ENCODE measurements at regions of chr15 and their contacts with region 1.

Region 1: GRCh38 chr15:41852736-41853590 is 14.3 kb downstream of the PLA2G4B start:
- DNase-seq: no peak
- ATAC-seq: peak; percentile 11; the same call in 1 of the 3 replicates
- H3K4me3 ChIP-seq: no peak overlapping the region
- H3K27ac ChIP-seq: no peak overlapping the region
- H3K4me1 ChIP-seq: peaks cover 0 to 45% of the 10 kb centered on the region in 2 experiments; a peak in 1 of 5 replicates
- H3K27me3 ChIP-seq: peaks cover 46 to 75% of the 10 kb centered on the region in 2 experiments; a peak in 4 of 5 replicates
- CTCF ChIP-seq: no peak
- EP300 ChIP-seq: no peak
- POLR2A ChIP-seq: no peak
- RAD21 ChIP-seq: no peak

Region 2: DNA sequence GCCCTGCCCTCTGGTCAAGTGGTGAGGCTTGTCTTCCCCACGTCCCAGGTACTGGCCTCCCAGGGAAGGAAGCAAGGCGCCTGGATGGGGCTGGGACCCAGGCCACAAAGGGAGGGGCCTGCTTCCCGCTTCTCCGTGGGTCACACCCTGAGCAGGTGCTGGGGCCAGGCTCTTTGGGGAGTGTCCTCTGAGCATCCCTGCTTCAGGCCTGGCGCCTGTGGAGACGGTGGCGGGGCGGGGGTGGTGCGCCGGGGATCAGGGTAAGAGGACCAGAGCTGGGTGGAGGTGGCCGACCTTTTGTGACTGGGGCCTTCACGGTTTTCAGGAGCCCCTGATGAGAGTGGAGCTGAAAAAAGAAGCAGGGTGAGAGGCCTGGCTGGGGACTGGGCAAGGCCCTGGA is 10.7 kb before region 1 on chr15:
- CTCF ChIA-PET with region 1: no interaction called
- POLR2A ChIA-PET with region 1: interaction called, 10 read pairs
- in situ Hi-C with region 1: no loop called
- intact Hi-C with region 1: no loop called
- DNase-seq: no peak
- ATAC-seq: no peak
- H3K4me3 ChIP-seq: no peak overlapping the region
- H3K27ac ChIP-seq: no peak overlapping the region
- H3K4me1 ChIP-seq: peaks cover 0 to 21% of the 10 kb centered on the region in 2 experiments; a peak in 2 of 5 replicates
- H3K27me3 ChIP-seq: no peaks in the 10 kb centered on the region
- CTCF ChIP-seq: no peak
- EP300 ChIP-seq: no peak
- POLR2A ChIP-seq: no peak
- RAD21 ChIP-seq: no peak

Measured in K562 (cell line).